ENCODE measurements at regions of chr10 and their contacts with region 1.

Region 1: GRCh38 chr10:75021379-75022249 is 89.8 kb upstream of the SAMD8 start:
- DNase-seq: no peak
- H3K4me3 ChIP-seq: no peak overlapping the region
- CTCF ChIP-seq: no peak

Region 2: DNA sequence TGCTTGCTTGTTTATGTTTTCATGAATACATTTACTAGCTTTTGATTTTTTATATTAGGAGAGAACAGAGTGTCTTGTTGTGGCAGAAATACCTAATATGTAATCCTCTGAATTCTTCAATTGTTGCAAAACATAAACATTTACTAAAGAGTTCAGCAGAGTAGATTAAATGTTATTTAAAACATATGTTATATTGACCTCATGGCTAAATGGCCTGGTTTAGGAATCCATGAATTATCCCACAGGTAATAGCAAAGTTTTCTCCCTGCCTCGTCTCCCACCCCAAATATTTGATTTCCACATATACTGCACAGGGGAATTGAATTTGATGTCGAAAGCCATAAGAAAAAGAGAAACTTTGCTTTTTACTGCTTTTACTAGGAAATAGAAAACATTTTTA is 758.8 kb before region 1 on chr10:
- in situ Hi-C with region 1: loop called (anchors 5 kb)
- DNase-seq: no peak
- H3K4me3 ChIP-seq: no peak overlapping the region
- CTCF ChIP-seq: no peak

Region 3: DNA sequence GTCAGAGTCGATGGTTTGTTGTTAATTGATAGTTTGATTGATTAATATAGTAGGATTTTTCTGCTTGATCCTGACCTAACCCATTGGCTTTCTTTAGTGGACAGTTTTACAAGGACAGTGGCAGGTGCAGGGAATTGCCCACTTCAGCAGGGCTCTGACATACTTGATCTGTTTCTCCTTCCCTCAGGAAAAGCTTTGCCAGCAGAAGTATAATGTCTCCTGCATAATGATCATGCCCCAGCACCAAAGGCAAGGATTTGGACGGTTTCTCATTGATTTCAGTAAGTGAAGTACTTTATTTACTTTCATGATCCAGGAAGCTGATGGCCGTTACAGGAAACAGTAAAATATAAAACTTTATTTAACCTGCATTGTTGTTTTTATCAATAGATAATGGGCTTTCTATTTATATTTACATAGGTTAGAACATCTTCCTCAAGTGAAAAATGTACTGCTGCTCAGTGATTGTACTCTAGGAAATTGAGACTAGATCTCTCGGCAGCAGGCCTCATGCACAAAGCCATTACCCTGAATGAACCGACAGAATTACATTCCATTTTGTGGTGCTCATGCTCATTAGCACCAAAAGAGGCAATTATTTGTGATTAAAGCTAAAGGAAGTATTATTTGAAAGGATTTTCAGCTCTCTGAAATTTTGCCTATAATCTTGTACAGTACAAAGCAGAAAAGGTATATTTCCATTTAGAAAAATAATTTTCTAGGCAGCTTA is 32.6 kb before region 1 on chr10:
- in situ Hi-C with region 1: no loop called
- DNase-seq: no peak
- H3K4me3 ChIP-seq: no peak overlapping the region
- CTCF ChIP-seq: no peak

Region 4: GRCh38 chr10:75062506-75063299 is 41.1 kb after region 1 on chr10:
- in situ Hi-C with region 1: no loop called
- DNase-seq: peak; percentile 97
- H3K4me3 ChIP-seq: no peak overlapping the region
- CTCF ChIP-seq: no peak

Measured in astrocyte of the cerebellum (primary cell).